Heart right ventricle (tissue), 16 donors: ENCODE measurements at regions of chr7 and their contacts with region 1.

Region 1: DNA sequence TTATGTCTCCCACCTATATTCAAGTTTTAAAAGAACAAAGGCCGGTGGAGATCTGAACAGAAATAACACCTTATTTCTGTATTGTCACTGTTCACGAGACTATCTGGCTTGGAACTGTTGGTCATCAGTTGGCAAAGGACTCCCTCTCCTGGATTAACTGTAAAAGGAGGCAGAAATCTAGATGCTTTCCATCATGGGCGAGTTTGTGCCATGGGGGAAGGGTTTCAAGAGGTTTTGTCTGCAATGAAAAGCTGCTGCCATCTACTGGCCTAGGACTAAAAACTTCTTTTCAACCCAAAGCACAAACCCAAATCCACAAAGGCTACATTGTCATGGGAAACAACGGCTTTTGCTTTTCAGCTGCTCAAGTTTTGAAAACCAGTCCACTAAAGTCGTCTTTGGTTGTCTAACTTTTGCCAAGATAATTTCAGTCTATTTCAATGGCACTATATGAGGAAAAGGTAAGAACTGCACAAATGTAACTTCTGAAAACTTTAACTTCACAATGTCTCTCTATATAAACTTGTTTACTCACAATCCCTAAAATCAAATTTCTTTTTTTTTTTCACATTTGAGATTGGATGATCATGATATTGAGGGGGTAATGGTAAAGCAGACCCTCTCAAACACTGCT is 196.8 kb downstream of the SKAP2 start:
- DNase-seq: peak in 1 of 2 donors; percentile 75
- ATAC-seq: peak in 7 of 8 donors; percentile 64 to 87 (median 75)
- H3K4me3 ChIP-seq: no peak overlapping the region
- H3K27ac ChIP-seq: no peak overlapping the region
- H3K4me1 ChIP-seq: peaks cover 0 to 7% (median 0%) of the 10 kb centered on the region in 9 donors
- H3K27me3 ChIP-seq: peaks cover 0 to 55% (median 40%) of the 10 kb centered on the region in 7 donors
- CTCF ChIP-seq: peak; percentile 49 to 87 (median 76)

Region 2: GRCh38 chr7:25894902-25895791 is 772.5 kb before region 1 on chr7:
- intact Hi-C with region 1: loop called in 7 of 10 experiments (anchors 2 to 10 kb)
- DNase-seq: peak; percentile 49 to 70
- ATAC-seq: peak; percentile 65 to 87 (median 74)
- H3K4me3 ChIP-seq: peak overlapping the region in 7 of 10 donors; percentile 1 to 35 (median 26)
- H3K27ac ChIP-seq: no peak overlapping the region
- H3K4me1 ChIP-seq: peaks cover 0 to 20% (median 7%) of the 10 kb centered on the region in 9 donors
- H3K27me3 ChIP-seq: peaks cover 5 to 74% (median 42%) of the 10 kb centered on the region in 7 donors
- CTCF ChIP-seq: peak; percentile 12 to 77 (median 67)

Region 3: DNA sequence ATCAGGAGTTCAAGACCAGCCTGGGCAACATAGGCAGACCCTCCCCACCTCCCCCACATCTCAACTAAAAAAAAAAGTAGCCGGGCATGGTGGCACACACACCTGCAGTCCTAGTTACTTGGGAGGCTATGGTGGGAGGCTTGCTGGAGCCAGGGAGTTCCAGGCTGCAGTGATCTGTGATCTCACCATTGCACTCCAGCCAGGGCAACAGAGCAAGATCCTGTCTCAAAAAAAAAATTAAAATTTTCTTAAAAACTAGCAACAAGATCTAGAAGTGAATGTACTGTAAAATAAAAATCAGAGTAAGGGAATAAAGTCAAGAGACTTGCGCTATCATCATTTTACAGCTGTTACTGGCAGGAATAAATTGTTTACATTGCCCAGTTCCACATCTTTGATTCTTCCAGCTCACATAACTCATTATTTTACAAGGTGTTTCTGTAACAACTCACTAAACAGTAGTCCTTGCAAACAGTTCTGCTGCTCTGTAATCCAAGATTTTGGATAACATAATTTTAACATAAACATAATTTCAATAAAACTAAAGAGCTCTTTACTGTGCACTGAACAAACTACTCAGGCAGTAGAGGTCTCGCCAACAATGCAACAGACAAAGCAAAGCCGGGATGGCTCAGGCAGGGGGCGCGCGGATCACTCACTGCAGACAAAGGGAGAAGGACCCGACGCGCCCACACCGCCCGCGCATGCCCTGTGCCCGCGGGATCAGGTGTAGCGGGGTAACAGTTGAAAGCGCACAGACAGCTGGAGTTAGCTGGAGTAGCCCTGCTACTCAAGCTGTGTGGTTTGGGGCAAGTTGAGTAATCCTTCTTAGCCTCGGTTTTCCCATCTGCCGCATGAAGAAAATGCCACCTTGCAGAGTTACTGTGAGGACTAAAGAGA is 588.9 kb before region 1 on chr7:
- intact Hi-C with region 1: loop called in 3 of 10 experiments (anchors 10 kb)
- DNase-seq: peak; percentile 35 to 55
- ATAC-seq: peak in 7 of 8 donors; percentile 65 to 83 (median 79)
- H3K4me3 ChIP-seq: no peak overlapping the region
- H3K27ac ChIP-seq: no peak overlapping the region
- H3K4me1 ChIP-seq: peaks cover 0 to 7% (median 0%) of the 10 kb centered on the region in 9 donors
- H3K27me3 ChIP-seq: peaks cover 0 to 93% (median 82%) of the 10 kb centered on the region in 7 donors
- CTCF ChIP-seq: peak in 7 of 9 donors; percentile 29 to 54 (median 40)

Region 4: GRCh38 chr7:26365077-26365900 is 302.3 kb before region 1 on chr7:
- intact Hi-C with region 1: loop called in 9 of 10 experiments (anchors 1 to 10 kb)
- DNase-seq: peak in 1 of 2 donors; percentile 57
- ATAC-seq: peak; percentile 65 to 89 (median 80)
- H3K4me3 ChIP-seq: no peak overlapping the region
- H3K27ac ChIP-seq: no peak overlapping the region
- H3K4me1 ChIP-seq: peaks cover 0 to 26% (median 0%) of the 10 kb centered on the region in 9 donors
- H3K27me3 ChIP-seq: peaks cover 0 to 62% (median 40%) of the 10 kb centered on the region in 7 donors
- CTCF ChIP-seq: peak; percentile 53 to 87 (median 77)

Region 5: DNA sequence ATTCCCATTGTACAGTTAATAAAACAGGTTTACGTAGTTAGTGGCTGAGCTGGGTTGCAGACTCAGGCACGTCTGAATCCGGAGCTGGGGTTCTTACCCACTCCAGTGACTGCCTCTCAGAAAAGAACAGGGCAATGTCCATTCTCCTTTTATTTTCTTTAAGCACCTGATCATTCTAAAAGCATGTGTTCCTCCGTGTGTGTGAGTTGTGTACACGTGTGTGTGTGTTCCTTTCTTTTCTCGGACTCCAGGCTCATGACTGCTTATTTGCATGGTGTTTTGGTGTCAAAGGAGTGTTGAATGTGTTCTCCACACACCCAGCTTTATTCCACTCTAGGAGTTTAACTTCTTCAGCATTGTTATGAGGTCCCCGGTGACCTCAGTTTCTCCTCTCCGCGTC is 115.9 kb before region 1 on chr7:
- intact Hi-C with region 1: loop called in 1 of 10 experiments (anchors 1 kb)
- DNase-seq: no peak
- ATAC-seq: peak in 1 of 8 donors; percentile 16
- H3K4me3 ChIP-seq: no peak overlapping the region
- H3K27ac ChIP-seq: no peak overlapping the region
- H3K4me1 ChIP-seq: peaks cover 0 to 12% (median 0%) of the 10 kb centered on the region in 9 donors
- H3K27me3 ChIP-seq: peaks cover 0 to 30% (median 3%) of the 10 kb centered on the region in 7 donors
- CTCF ChIP-seq: no peak